ENCODE measurements at regions of chr14 and their contacts with region 1.

Region 1: DNA sequence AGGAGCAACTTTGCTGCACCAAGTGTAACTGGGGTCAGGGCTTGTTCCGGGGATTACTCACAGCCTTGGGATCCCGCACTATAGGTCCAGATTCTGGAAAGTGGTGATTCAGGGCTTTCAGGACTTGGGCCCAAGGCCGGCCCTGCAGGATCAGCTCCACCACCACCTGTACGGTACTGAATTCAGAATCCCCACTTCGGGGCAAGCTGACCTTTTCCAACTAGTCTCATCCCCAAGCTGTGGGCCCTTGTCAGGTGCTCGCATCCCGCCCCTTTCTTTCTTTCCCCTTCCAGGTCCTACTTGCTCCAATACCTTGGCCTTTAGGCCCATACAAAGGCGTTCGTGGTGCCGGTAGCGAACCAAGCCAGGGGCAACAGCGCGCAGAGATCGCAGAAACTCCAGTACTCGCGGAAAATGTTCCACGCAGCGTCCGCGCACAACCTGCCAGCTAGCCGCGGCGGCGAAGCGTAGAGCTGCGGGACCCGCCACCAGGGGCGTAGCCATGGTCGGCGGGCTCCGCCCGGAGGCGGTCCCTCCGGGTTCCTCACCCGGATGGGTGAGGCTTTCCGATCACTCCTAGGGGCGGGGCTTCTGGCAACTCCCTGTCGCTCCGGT is 487 bp downstream of the TINF2 start:
- DNase-seq: peak; percentile 95
- ATAC-seq: peak; percentile 87

Region 2: DNA sequence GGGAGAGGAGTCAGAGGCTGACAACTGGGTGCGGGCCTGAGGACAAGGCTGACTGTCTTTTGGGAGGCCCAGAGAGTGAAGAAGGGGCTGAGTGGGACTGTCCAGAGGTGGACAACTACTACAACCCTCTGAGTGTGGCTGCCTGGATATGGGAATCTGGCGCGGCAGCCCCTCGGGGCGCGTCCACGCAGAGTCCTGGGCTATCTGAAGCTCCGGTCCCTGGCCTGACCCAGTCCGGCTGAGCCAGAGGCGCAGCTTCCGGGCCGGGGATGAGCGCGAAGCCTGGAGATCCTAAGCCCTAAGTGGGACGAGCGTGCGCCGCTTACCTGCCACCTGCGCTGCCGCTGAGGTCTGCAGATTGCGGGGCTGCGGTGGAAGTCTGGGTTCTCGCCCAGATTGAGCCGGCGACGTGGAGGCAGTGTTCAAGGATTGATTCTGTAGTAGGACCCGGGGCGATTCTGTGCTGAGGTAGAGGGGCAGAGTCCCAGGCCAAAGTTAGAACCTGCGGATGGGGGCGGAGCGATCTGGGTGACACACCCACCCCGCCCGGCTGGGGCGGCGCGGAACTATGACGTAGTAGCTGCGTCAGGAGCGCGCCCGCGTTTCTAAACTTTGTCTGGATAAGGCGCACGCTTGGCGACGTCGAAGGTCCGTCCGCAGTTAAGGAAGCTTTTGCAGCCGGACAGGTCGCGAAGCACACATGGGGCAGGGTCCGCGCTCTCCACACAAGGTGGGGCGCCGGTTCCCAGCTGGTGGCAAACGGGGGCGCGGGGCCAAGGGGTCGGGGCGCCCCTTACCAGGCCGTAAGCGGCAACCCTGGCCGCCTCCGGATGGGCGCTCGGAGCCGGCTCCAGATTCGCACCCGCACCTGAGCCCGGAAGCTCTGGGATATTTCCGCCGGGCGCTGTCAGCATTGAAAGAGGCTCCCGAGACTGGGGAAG is 57.6 kb after region 1 on chr14 and contains the starts of genes DHRS1 and NOP9:
- intact Hi-C with region 1: loop called in 1 of 2 experiments (anchors 5 kb)
- DNase-seq: peak; percentile 90 to 97
- ATAC-seq: peak; percentile 89
- total RNA-seq, gene DHRS1: 64.2 to 76.6 TPM
- total RNA-seq, gene NOP9: 24.4 to 26.0 TPM

Measured in left colon (tissue), 2 donors.